Right ventricle myocardium inferior (tissue), 1 donor: ENCODE measurements at regions of chr9 and their contacts with region 1.

Region 1: DNA sequence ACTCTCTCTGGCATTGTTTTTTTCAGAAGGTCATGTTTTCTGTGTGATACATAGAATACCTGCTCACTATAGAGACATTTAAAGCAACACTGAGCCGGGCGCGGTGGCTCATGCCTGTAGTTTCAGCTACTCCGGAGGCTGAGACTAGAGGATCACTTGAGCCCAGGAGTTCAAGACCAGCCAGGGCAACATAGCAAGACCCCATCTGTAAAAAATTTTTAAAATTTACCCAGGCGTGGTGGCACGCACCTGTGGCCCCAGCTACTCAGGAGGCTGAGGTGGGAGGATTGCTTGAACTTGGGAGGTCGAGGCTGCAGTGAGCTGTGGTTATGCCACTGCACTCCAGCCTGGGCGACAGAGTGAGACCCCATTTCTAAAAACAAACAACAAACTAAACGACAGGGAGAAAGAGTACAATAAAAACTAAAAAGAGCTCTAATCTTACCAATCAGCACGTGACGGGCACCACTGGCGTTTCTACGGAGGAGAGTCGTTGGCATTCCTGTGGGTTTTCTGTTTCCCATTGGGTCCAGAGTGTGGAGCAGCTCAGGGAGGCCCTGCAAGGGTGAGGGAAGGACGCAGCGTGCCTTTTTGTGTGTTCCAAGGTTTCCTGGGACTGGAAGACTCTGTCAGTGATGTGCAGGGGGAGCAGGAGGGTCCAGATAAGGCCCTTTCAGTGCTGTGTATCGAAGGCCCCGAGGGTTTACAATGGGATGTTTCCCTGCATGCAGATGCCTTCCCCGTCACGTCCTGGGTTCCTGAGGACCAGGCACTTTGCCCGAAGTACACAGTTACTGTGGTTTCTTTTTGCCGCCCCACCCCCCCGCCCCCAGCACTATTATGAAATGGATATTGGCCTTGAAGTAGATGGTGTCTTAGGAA is 7.2 kb upstream of the RNU6ATAC start:
- DNase-seq: no peak
- ATAC-seq: peak; percentile 35

Region 2: DNA sequence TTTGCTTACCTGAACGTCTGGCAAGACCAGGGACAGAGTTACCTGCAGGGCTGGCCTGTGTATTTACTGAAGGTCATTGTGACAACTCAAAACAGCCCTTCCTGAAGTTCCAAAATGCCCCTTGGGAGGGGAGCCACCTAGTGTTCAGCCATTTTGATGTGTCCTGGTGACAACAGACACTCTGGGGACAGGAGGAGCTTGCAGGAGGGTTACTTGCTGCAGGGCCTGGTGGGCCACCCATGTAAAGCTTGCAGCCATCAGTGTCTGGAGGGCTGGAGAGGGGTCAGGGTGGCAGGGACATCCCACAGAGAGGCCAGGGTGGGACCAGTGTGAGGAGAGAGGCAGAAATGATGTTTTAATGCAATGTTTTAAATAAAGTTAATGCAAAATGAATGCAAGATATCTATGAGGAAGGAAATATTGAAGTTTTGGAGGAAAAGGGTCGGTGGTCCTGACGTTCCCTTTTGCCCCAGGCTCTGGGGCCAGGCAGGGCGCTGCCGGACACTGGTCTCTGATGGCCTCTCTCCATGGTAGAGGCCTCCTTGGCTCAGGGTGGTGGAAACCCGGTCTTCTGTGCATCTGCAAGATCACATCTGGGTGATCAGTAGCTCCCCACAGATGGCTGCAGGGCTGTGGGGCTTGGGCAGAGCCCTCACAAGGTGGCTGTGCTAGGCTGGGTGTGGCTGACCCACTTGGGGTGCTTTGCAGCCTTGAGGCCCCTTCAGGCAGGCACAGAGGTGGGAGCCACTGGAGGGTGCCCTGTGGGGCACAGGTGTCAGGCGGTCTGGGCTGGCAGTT is 46.5 kb after region 1 on chr9:
- intact Hi-C with region 1: loop called (anchors 2 kb)
- DNase-seq: no peak
- ATAC-seq: no peak

Region 3: GRCh38 chr9:134443168-134444037 is 271.8 kb after region 1 on chr9:
- intact Hi-C with region 1: loop called (anchors 1 kb)
- DNase-seq: peak; percentile 93
- ATAC-seq: peak; percentile 80